ENCODE measurements at regions of chr11 and their contacts with region 1.

Region 1: DNA sequence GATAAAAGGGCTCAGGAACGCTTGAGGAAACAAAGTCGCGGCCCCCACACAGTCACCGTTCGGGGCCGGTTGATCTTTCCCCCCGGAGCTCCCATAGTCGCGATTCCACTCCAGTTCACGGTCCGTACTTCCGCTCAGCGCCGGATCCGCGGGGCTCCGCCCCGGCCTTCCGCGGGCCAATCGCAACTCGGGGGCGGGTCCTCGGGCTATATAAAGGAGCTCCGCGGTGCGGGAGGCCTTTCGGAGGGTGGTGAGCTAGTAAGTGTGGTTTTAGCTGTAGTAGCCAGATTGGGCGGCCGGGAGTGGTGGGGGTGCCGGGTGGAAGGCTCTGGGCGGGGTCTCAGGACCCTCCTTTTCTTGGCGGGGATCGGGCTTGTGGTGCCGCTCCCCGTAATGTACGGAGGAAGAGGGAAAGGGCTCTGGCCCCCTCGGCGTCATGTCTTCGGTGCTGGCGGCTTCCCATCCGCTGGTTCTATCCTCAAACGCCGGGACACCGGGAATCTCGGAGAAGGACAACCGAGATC is at the starts of genes C11orf98 and CSKMT:
- DNase-seq: peak; percentile 99
- H3K4me3 Mint-ChIP-seq: peak within 1 kb of the TSS; percentile 98
- H3K27ac Mint-ChIP-seq: peak within 1 kb of the TSS; percentile 93
- H3K4me1 Mint-ChIP-seq: peaks cover 26% of the 10 kb centered on the region
- H3K27me3 Mint-ChIP-seq: no peaks in the 10 kb centered on the region
- total RNA-seq, gene C11orf98: 143 and 147 TPM in 2 replicates
- total RNA-seq, gene CSKMT: 59.5 and 60.9 TPM in 2 replicates

Region 2: DNA sequence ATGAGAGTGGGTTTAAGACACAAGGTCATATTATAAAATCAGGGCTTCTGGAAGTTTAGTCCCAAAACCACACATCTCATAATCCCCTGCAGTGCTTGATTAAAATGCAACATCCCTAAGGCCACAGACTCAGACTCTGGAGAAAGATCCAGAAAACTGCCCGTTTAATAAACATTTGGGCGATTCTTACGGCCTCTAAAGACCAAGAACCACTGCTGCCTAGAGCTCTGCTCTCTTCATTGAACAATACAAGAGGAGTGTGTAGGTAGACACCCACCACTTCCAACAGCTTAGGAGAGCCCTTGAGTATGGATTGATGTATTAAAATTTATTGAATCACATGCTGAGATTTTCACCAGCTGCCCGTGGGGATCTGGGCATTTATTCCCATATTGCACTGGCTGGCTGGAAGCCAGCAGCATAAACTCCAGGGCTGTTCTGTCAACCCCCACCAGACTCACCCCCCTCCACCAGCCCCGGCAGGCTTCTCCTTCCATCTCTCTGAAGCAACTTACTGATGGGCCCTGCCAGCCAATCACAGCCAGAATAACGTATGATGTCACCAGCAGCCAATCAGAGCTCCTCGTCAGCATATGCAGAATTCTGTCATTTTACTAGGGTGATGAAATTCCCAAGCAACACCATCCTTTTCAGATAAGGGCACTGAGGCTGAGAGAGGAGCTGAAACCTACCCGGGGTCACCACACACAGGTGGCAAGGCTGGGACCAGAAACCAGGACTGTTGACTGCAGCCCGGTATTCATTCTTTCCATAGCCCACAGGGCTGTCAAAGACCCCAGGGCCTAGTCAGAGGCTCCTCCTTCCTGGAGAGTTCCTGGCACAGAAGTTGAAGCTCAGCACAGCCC is 715.7 kb before region 1 on chr11:
- intact Hi-C with region 1: no loop called
- DNase-seq: peak; percentile 62
- H3K4me3 Mint-ChIP-seq: no peak overlapping the region
- H3K27ac Mint-ChIP-seq: no peak overlapping the region
- H3K4me1 Mint-ChIP-seq: peaks cover 2% of the 10 kb centered on the region
- H3K27me3 Mint-ChIP-seq: peaks cover 7% of the 10 kb centered on the region

Region 3: GRCh38 chr11:62516736-62517371 is 148.3 kb before region 1 on chr11:
- intact Hi-C with region 1: no loop called
- DNase-seq: no peak
- H3K4me3 Mint-ChIP-seq: no peak overlapping the region
- H3K27ac Mint-ChIP-seq: no peak overlapping the region
- H3K4me1 Mint-ChIP-seq: peaks cover 2% of the 10 kb centered on the region
- H3K27me3 Mint-ChIP-seq: no peaks in the 10 kb centered on the region

Region 4: DNA sequence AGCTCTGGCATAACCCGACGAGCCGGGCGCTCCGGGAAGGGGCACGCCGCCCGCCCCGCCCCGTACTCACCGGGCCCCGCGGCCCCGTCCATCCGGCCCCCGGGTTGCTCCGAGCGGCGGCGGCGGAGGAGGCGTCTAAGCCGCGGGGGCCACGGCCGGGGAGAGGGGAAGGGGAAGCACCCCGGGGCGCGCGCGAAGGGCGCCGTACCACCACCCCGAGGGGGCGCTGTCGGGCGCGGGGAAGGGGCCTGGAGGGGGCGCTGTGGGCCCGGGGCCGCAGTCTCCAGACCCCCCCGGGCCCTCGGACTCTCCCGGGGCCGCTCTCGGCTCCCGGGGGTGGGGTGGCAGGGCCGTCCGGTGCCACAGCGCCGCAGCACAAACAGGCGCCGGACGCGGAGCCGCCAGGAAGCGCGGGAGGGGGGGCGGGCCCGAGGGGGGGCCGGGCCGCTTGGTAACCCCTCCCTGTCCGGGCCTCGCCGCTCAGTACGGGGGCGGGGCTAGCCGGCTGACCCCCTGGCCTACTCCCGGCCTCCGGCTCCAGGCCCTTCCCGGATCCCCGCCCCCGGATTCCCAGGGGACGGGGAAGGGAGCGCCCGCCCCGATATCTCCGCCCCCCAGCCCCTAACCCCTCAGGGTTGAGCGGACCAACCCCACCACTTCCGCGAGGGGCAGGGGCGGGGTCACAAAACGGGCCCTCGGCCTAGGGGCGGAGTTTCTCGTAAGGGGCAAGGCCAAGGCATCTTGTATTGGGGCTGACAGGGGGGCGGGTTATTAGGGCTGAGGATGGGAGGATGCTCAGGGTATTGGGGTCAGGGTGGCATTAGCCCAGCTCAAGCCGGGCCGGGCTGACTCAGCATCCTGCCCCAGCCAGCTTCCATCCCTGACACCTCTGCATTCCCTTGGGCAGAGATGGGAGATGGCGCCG is 52.5 kb before region 1 on chr11 and contains the starts of genes EML3 and ROM1:
- intact Hi-C with region 1: loop called (anchors 2 kb)
- DNase-seq: peak; percentile 97
- H3K4me3 Mint-ChIP-seq: peak within 1 kb of the TSS; percentile 98
- H3K27ac Mint-ChIP-seq: peak within 1 kb of the TSS; percentile 97
- H3K4me1 Mint-ChIP-seq: peaks cover 46% of the 10 kb centered on the region
- H3K27me3 Mint-ChIP-seq: no peaks in the 10 kb centered on the region
- total RNA-seq, gene EML3: 161 and 166 TPM in 2 replicates
- total RNA-seq, gene ROM1: 2.3 and 3.1 TPM in 2 replicates

Region 5: DNA sequence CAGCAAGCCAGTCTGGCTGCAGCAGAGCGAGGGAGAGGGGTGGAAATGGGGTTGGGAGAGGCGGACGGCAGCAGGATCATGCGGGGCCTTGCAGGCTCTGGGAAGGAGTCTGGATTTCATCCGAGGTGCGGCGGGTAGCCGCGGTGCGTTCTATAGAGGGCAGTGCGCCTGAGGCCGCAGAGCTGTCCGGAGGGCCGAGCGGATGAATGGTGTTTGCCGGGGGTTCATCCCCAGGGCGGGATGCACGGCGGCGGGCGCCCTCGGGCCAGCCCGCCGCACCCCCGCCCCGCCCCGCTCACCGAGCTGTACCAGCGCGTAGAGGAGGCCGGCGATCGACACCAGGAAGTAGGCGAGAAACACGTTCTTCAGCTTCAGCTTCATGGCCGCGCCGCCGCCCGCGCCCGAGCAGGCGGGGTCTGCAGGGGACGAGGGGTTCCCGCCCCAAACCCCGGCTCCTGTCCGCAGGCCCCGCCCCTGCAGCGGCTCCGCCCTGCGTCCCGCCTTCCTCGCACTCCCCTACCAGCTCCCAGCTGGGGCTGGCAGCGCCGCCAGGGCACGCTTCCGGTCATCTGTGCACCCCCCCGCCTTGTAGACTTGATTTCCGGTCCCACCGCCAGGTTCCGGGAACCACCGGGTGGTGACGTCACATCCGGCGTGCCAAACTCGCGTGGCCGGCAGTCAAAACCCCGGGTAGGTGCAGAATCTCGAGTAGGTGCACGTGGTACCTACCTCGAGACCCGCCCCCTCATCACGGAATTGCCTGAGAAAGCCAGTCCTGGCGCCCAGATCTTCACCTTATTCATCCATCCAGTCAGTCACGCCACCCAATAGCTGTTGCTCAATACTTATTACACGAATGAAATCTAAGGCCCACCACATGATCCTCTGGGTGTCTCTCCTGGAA is 43.3 kb before region 1 on chr11 and contains the start of gene B3GAT3:
- intact Hi-C with region 1: loop called (anchors 2 kb)
- DNase-seq: peak; percentile 99
- H3K4me3 Mint-ChIP-seq: peak within 1 kb of the TSS; percentile 97
- H3K27ac Mint-ChIP-seq: peak within 1 kb of the TSS; percentile 99
- H3K4me1 Mint-ChIP-seq: peaks cover 25% of the 10 kb centered on the region
- H3K27me3 Mint-ChIP-seq: peaks cover 1% of the 10 kb centered on the region
- total RNA-seq, gene B3GAT3: 80.3 and 91.4 TPM in 2 replicates

Region 6: DNA sequence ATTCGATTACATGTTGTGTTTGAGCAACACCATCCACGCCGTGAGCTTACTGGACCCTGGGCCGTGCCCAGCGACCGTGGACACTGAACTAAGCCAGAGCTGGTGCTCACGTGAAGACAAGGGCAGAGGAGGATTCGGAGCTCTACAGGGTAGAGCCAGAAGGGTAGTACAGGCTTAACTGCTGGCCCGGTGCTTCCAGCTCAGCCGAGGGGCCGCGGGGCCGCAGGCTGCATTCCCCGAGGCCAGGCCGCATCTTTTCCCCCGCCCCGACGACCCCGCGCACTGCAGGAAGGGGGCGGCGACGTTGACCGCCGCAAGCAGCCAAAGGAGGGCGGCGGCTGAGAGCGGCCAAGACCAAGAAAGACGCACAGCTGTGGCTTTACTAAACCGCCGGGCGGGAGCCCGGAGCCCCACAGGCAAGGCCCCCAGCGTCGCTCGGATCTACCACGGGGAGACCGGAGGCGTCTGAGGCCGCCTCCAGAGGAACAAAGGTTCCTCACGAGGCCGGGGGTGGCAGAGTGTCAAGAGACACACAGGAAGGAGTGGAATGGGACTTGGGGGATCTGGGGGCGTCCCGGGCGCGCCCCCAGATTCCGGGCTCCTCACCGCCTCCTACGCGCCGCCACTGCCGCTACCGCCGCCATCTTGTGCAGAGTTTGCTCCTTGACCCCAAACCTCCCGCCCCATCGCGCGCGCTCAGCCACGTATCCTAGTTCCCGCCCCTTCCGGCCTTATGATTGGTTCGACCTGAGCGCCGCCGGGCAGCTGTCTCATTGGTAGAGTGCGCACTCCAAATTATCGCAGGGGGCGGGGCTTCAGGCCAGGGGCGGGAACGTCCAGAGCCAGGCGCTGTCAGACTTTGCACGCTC is 18.9 kb before region 1 on chr11 and contains the start of gene GANAB:
- intact Hi-C with region 1: loop called (anchors 1 kb)
- DNase-seq: peak; percentile 99
- H3K4me3 Mint-ChIP-seq: peak within 1 kb of the TSS; percentile 99
- H3K27ac Mint-ChIP-seq: peak within 1 kb of the TSS; percentile 96
- H3K4me1 Mint-ChIP-seq: peaks cover 21% of the 10 kb centered on the region
- H3K27me3 Mint-ChIP-seq: no peaks in the 10 kb centered on the region
- total RNA-seq, gene GANAB: 251 and 257 TPM in 2 replicates

Region 7: DNA sequence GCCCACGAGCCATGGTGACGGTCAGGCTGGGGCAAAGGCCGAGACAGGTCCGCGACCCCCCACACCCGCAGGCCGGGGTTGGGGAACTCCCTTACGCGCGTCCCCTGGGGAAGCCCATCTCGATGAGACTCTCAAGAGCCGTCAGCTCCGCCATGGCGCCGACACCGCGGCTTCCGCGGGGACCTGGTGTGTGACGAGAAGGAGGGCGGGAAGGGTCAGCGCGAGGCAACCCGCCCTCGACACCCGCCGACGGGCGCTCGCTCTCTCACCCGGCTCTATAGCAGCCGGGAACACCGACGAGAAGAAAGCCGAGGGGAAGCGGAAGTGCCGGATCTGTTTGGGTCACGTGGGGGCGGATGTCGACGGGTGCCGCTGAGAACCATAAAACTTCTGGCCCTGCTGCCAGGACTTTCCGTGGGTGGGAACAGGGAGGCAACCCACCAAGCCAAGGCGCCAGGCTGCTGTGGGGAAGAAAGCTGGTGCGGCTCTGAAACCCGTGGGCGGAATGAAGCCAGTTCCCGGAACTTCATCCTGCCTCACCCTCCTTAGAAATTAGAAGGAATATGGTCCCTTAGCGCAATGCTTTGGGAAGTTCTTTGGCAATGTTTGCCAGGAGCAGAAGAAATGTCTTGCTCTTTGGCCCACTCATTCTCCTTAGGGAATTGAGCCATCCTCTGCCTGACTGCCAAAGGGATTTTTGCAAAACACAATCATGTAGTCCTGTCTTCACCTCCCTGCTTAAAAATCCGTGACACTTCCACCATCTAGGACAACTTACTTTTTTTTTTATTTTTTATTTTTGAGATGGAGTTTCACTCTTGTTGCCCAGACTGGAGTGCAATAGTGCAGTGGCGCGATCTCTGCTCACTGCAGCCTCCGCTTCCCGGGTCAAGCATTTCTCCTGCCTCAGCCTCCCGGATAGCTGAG is 13.9 kb after region 1 on chr11 and contains the start of gene UBXN1:
- intact Hi-C with region 1: loop called (anchors 2 kb)
- DNase-seq: peak; percentile 95
- H3K4me3 Mint-ChIP-seq: peak within 1 kb of the TSS; percentile 85
- H3K27ac Mint-ChIP-seq: peak within 1 kb of the TSS; percentile 96
- H3K4me1 Mint-ChIP-seq: peaks cover 27% of the 10 kb centered on the region
- H3K27me3 Mint-ChIP-seq: no peaks in the 10 kb centered on the region
- total RNA-seq, gene UBXN1: 118 and 121 TPM in 2 replicates

Region 8: GRCh38 chr11:62841361-62842184 is 176.4 kb after region 1 on chr11:
- intact Hi-C with region 1: loop called (anchors 5 kb)
- DNase-seq: peak; percentile 95
- H3K4me3 Mint-ChIP-seq: no peak overlapping the region
- H3K27ac Mint-ChIP-seq: no peak overlapping the region
- H3K4me1 Mint-ChIP-seq: peaks cover 26% of the 10 kb centered on the region
- H3K27me3 Mint-ChIP-seq: no peaks in the 10 kb centered on the region

Measured in activated CD4-positive, alpha-beta T cell treated with anti-CD3 and anti-CD28 coated beads, Interleukin-2, amount 10 ng/mL, durations not matched to agents 24 days and 14 days (primary cell).